Activated CD4-positive, alpha-beta T cell treated with anti-CD3 and anti-CD28 coated beads, Interleukin-2, amount 10 ng/mL, durations not matched to agents 7 days and 5 days (primary cell): ENCODE measurements at regions of chr17 and their contacts with region 1.

Region 1: DNA sequence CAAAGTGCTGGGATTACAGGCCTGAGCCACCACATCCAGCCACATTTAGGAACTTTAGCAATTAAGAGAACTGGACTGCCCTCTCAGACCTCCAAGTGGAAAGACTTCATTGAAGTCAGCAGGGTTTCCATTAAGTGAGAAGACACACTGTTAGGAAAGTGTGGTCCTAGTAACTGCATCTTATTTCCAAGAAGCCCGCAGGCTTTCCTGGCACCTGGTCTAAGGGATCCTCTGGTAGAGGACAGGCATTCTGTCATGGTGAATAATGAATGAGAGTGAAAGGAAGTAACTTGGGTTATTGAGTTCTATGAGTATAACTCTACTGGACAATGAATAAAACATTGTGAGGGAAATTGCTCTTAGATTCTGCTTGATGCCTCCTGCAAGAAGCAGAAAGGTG is 14.1 kb downstream of the C17orf75 start:
- DNase-seq: no peak
- H3K4me3 Mint-ChIP-seq: no peak overlapping the region
- H3K27ac Mint-ChIP-seq: peak overlapping the region; percentile 19
- H3K4me1 Mint-ChIP-seq: peaks cover 64% of the 10 kb centered on the region
- H3K27me3 Mint-ChIP-seq: no peaks in the 10 kb centered on the region

Region 2: GRCh38 chr17:32341857-32342602 is 14.1 kb after region 1 on chr17 and contains the start of gene C17orf75:
- CTCF ChIA-PET with region 1: interaction called, 10 read pairs
- POLR2A ChIA-PET with region 1: interaction called, 4 read pairs
- DNase-seq: peak; percentile 79
- H3K4me3 Mint-ChIP-seq: peak within 1 kb of the TSS; percentile 88
- H3K27ac Mint-ChIP-seq: peak within 1 kb of the TSS; percentile 91
- H3K4me1 Mint-ChIP-seq: peaks cover 35% of the 10 kb centered on the region
- H3K27me3 Mint-ChIP-seq: no peaks in the 10 kb centered on the region
- total RNA-seq, gene C17orf75: 25.8 to 27.7 TPM